ENCODE measurements at regions of chr3 and their contacts with region 1.

Region 1: GRCh38 chr3:150603153-150603979 is at the start of gene SELENOT:
- DNase-seq: peak; percentile 91 to 97 (median 96)
- ATAC-seq: peak; percentile 89
- H3K4me3 ChIP-seq: peak within 1 kb of the TSS; percentile 76
- H3K4me3 Mint-ChIP-seq: peak within 1 kb of the TSS; percentile 93 to 100 (median 98)
- H3K27ac ChIP-seq: peak within 1 kb of the TSS; percentile 90
- H3K27ac Mint-ChIP-seq: peak within 1 kb of the TSS; percentile 97 to 100 (median 99)
- H3K4me1 ChIP-seq: peaks cover 27 to 41% of the 10 kb centered on the region in 2 donors
- H3K4me1 Mint-ChIP-seq: peaks cover 43 to 78% (median 70%) of the 10 kb centered on the region in 7 donors
- H3K27me3 ChIP-seq: no peaks in the 10 kb centered on the region
- H3K27me3 Mint-ChIP-seq: no peaks in the 10 kb centered on the region
- total RNA-seq, gene SELENOT: 51.3 to 104 (median 78.1) TPM

Region 2: GRCh38 chr3:149969940-149970715 is 633.2 kb before region 1 on chr3:
- CTCF ChIA-PET with region 1: no interaction called
- POLR2A ChIA-PET with region 1: no interaction called
- intact Hi-C with region 1: loop called in 1 of 2 experiments (anchors 2 kb)
- DNase-seq: peak; percentile 54 to 81 (median 75)
- ATAC-seq: peak; percentile 64
- H3K4me3 ChIP-seq: peak overlapping the region; percentile 53
- H3K4me3 Mint-ChIP-seq: peak overlapping the region; percentile 85 to 96 (median 92)
- H3K27ac ChIP-seq: peak overlapping the region; percentile 63
- H3K27ac Mint-ChIP-seq: peak overlapping the region in 8 of 9 donors; percentile 60 to 94 (median 86)
- H3K4me1 ChIP-seq: peaks cover 0 to 4% of the 10 kb centered on the region in 2 donors
- H3K4me1 Mint-ChIP-seq: peaks cover 16 to 26% (median 20%) of the 10 kb centered on the region in 7 donors
- H3K27me3 ChIP-seq: peaks cover 0 to 5% of the 10 kb centered on the region in 2 donors
- H3K27me3 Mint-ChIP-seq: peaks cover 6 to 55% (median 26%) of the 10 kb centered on the region in 5 donors

Region 3: GRCh38 chr3:150180334-150180733 is 423.0 kb before region 1 on chr3:
- CTCF ChIA-PET with region 1: no interaction called
- POLR2A ChIA-PET with region 1: no interaction called
- intact Hi-C with region 1: no loop called
- DNase-seq: no peak
- ATAC-seq: no peak
- H3K4me3 ChIP-seq: no peak overlapping the region
- H3K4me3 Mint-ChIP-seq: no peak overlapping the region
- H3K27ac ChIP-seq: no peak overlapping the region
- H3K27ac Mint-ChIP-seq: no peak overlapping the region
- H3K4me1 ChIP-seq: peaks cover 0 to 4% of the 10 kb centered on the region in 2 donors
- H3K4me1 Mint-ChIP-seq: no peaks in the 10 kb centered on the region
- H3K27me3 ChIP-seq: no peaks in the 10 kb centered on the region
- H3K27me3 Mint-ChIP-seq: peaks cover 3 to 24% (median 14%) of the 10 kb centered on the region in 5 donors

Region 4: GRCh38 chr3:150303776-150304175 is 299.6 kb before region 1 on chr3:
- CTCF ChIA-PET with region 1: no interaction called
- POLR2A ChIA-PET with region 1: no interaction called
- intact Hi-C with region 1: no loop called
- DNase-seq: peak in 2 of 9 donors; percentile 0 to 4
- ATAC-seq: peak; percentile 38
- H3K4me3 ChIP-seq: no peak overlapping the region
- H3K4me3 Mint-ChIP-seq: no peak overlapping the region
- H3K27ac ChIP-seq: no peak overlapping the region
- H3K27ac Mint-ChIP-seq: no peak overlapping the region
- H3K4me1 ChIP-seq: no peaks in the 10 kb centered on the region
- H3K4me1 Mint-ChIP-seq: no peaks in the 10 kb centered on the region
- H3K27me3 ChIP-seq: no peaks in the 10 kb centered on the region
- H3K27me3 Mint-ChIP-seq: peaks cover 34 to 53% (median 42%) of the 10 kb centered on the region in 5 donors

Region 5: DNA sequence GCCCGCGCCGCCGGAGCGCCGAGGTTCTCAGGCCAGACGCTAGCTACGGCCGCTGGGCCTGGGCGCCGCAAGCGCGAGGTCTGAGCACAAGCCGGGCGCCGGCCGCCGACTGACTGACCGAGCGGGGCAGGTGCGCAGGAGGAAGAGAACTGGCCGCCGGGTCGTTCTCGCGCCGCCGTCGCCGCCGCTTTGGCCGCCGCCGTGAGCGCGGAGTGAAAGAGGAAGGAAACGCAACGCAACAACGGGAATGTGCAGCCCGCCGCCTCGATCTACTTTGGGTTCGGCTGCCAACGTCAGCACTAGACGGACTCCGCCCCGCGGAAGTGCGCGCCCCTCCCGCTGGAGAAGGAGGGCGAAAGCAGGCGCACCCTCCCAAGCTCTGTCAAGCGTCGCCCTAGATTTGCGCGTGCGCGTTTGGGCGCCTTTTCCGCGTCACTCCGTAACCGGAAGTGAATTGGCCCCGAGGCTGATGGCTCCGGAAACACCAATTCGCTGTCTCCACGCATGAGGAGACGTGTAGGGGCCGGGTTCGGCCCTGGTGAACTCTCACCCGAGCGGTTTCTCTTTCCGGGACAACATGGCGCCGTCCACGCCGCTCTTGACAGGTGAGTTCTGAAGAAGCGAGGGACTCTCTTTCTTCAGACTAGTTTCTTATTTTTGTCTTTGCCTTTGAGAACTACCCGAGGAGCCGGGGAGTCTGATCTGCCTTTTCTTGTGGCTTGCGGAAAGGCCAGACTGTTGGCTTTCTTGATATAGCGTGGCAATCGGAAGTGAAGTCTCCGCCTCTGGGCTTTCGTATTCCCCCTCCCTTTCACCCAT is 56.9 kb before region 1 on chr3 and contains the starts of genes EIF2A and SERP1:
- CTCF ChIA-PET with region 1: no interaction called
- POLR2A ChIA-PET with region 1: interaction called, 53 read pairs
- intact Hi-C with region 1: loop called (anchors 1 kb)
- DNase-seq: peak; percentile 97 to 100 (median 100)
- ATAC-seq: peak; percentile 94
- H3K4me3 ChIP-seq: peak within 1 kb of the TSS; percentile 78
- H3K4me3 Mint-ChIP-seq: peak within 1 kb of the TSS; percentile 88 to 99 (median 96)
- H3K27ac ChIP-seq: peak within 1 kb of the TSS; percentile 96
- H3K27ac Mint-ChIP-seq: peak within 1 kb of the TSS; percentile 93 to 100 (median 98)
- H3K4me1 ChIP-seq: peaks cover 15 to 23% of the 10 kb centered on the region in 2 donors
- H3K4me1 Mint-ChIP-seq: peaks cover 34 to 84% (median 79%) of the 10 kb centered on the region in 7 donors
- H3K27me3 ChIP-seq: no peaks in the 10 kb centered on the region
- H3K27me3 Mint-ChIP-seq: no peaks in the 10 kb centered on the region
- total RNA-seq, gene EIF2A: 94.7 to 135 (median 105) TPM
- total RNA-seq, gene SERP1: 89.4 to 120 (median 115) TPM

Region 6: GRCh38 chr3:150635526-150635925 is 32.2 kb after region 1 on chr3:
- CTCF ChIA-PET with region 1: no interaction called
- POLR2A ChIA-PET with region 1: interaction called, 3 read pairs
- intact Hi-C with region 1: loop called in 1 of 2 experiments (anchors 5 kb)
- DNase-seq: peak in 4 of 9 donors; percentile 7 to 19 (median 10)
- ATAC-seq: peak; percentile 83
- H3K4me3 ChIP-seq: no peak overlapping the region
- H3K4me3 Mint-ChIP-seq: peak overlapping the region in 9 of 10 donors; percentile 6 to 64 (median 37)
- H3K27ac ChIP-seq: no peak overlapping the region
- H3K27ac Mint-ChIP-seq: peak overlapping the region in 7 of 9 donors; percentile 12 to 79 (median 41)
- H3K4me1 ChIP-seq: peaks cover 12 to 13% of the 10 kb centered on the region in 2 donors
- H3K4me1 Mint-ChIP-seq: peaks cover 10 to 34% (median 27%) of the 10 kb centered on the region in 7 donors
- H3K27me3 ChIP-seq: no peaks in the 10 kb centered on the region
- H3K27me3 Mint-ChIP-seq: no peaks in the 10 kb centered on the region

Region 7: DNA sequence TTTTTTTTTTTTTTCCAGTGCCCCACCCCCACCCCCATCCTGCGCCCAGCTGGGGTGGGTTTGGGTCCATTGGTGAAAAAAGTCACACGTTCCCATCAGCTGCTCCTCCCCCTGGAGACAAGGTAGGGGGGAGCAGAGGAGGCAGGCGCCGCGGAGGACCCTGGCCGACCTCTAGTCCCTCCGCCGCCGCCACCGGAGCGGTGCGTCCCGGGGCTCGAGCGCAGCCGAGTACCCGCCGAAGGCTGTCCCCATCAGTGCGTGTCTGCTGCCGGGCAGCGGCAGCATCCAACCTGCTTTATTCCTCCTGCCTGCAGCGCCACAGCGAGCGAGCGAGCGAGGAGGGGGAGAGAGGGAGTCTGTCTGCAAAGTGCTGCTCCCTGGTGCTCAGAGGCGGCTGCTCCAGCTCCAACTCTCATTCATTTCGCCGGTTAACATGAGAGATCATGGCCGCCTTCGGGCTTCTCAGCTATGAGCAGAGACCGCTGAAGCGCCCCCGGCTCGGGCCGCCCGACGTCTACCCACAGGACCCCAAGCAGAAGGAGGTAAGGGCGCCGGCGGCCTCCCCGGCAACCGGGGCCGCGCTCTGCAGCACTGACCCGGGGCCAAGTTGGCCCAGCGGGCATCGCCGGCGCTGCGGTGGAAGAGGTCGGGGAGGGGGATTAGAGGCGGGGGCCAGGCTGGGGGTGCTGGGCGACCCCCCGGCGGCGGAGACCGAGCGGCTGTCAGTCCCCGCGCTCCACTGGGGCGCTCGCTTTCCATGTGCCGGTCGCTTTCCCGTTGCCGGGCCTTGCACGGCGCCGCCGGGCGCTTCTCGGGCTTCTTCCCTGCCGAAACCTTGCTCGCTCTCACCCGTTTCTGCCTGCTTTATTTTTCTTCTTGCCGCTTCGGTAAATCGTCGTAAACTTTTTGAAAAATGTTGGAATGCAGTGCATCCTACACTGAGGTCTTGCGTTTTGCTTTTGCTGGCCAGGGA is 483.4 kb after region 1 on chr3:
- CTCF ChIA-PET with region 1: no interaction called
- POLR2A ChIA-PET with region 1: no interaction called
- intact Hi-C with region 1: loop called in 1 of 2 experiments (anchors 5 kb)
- DNase-seq: peak; percentile 32 to 72 (median 50)
- ATAC-seq: peak; percentile 88
- H3K4me3 ChIP-seq: peak overlapping the region; percentile 58
- H3K4me3 Mint-ChIP-seq: peak overlapping the region; percentile 85 to 94 (median 90)
- H3K27ac ChIP-seq: no peak overlapping the region
- H3K27ac Mint-ChIP-seq: peak overlapping the region in 4 of 9 donors; percentile 20 to 73 (median 57)
- H3K4me1 ChIP-seq: peaks cover 0 to 6% of the 10 kb centered on the region in 2 donors
- H3K4me1 Mint-ChIP-seq: peaks cover 0 to 21% (median 11%) of the 10 kb centered on the region in 7 donors
- H3K27me3 ChIP-seq: peaks cover 0 to 10% of the 10 kb centered on the region in 2 donors
- H3K27me3 Mint-ChIP-seq: peaks cover 31 to 65% (median 58%) of the 10 kb centered on the region in 5 donors

Region 8: DNA sequence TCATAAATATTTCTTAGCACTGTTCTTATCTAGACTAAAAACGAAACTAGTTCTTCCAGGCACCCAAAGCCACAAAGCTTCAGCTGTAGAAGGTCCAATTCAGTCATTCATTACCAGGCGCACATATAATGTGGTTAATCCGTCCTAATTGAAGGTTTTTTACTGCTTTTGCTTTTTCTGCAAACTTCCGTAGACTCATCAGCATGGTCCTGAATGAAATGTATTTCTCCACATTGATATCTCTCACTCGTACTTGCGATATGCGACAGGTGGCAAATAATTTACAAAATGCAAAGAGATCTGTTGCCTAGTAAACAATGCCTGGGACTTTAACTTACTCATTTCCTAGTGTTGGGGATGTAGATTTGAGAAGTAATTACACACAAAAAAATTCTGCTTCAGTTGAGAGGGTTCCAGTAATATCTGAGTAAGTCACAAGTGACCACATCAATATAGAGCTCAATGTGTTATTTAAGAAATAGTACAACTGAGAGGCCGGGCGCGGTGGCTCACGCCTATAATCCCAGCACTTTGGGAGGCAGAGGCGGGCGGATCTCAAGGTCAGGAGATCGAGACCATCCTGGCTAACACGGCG is 1590.4 kb after region 1 on chr3:
- CTCF ChIA-PET with region 1: no interaction called
- POLR2A ChIA-PET with region 1: no interaction called
- intact Hi-C with region 1: loop called in 1 of 2 experiments (anchors 5 kb)
- DNase-seq: peak in 6 of 9 donors; percentile 44 to 63 (median 51)
- ATAC-seq: peak; percentile 70
- H3K4me3 ChIP-seq: peak overlapping the region; percentile 58
- H3K4me3 Mint-ChIP-seq: peak overlapping the region; percentile 72 to 92 (median 86)
- H3K27ac ChIP-seq: peak overlapping the region; percentile 70
- H3K27ac Mint-ChIP-seq: peak overlapping the region; percentile 76 to 100 (median 93)
- H3K4me1 ChIP-seq: peaks cover 43 to 46% of the 10 kb centered on the region in 2 donors
- H3K4me1 Mint-ChIP-seq: peaks cover 52 to 91% (median 85%) of the 10 kb centered on the region in 7 donors
- H3K27me3 ChIP-seq: no peaks in the 10 kb centered on the region
- H3K27me3 Mint-ChIP-seq: no peaks in the 10 kb centered on the region

Measured in naive thymus-derived CD4-positive, alpha-beta T cell (primary cell).